GM12878 (cell line): ENCODE measurements at regions of chr4 and their contacts with region 1.

Region 1: GRCh38 chr4:74376888-74377483 is 12.0 kb downstream of the EREG start:
- DNase-seq: no peak
- ATAC-seq: peak; percentile 81
- H3K4me3 ChIP-seq: no peak overlapping the region
- H3K27ac ChIP-seq: no peak overlapping the region
- H3K4me1 ChIP-seq: no peaks in the 10 kb centered on the region
- H3K27me3 ChIP-seq: no peaks in the 10 kb centered on the region; a peak in 1 of 4 replicates
- CTCF ChIP-seq: peak; percentile 35 to 50 (median 36); a peak in 5 of 6 replicates
- EP300 ChIP-seq: no peak
- POLR2A ChIP-seq: no peak
- RAD21 ChIP-seq: peak; percentile 65

Region 2: DNA sequence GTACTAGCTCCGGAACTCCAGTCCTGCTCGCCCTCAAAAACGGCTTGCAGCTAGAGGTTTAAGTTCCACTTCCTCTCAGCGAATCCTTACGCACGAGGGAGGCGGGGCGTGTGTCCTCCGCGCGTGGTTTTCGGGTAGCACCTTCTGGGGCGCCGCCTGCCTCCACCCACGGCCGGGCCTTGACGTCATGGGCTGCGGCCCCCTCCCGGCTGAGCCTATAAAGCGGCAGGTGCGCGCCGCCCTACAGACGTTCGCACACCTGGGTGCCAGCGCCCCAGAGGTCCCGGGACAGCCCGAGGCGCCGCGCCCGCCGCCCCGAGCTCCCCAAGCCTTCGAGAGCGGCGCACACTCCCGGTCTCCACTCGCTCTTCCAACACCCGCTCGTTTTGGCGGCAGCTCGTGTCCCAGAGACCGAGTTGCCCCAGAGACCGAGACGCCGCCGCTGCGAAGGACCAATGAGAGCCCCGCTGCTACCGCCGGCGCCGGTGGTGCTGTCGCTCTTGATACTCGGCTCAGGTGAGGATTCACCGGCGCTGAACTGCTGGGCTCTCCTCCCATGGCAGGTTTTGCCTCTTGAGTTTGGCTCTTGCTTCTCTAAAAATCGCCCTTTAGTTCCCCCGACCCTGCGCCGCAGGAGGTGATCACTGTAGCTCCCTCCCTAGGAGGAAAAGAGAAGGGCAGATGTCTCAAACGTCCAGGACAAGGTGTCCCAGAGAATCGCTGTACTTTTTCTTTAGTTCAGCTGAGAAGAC is 68.1 kb after region 1 on chr4 and contains the start of gene AREG:
- CTCF ChIA-PET with region 1: no interaction called
- POLR2A ChIA-PET with region 1: no interaction called
- RAD21 ChIA-PET with region 1: no interaction called
- SMC1A ChIA-PET with region 1: interaction called, 3 read pairs
- in situ Hi-C with region 1: no loop called
- intact Hi-C with region 1: loop called (anchors 5 kb)
- DNase-seq: peak; percentile 12
- ATAC-seq: peak; percentile 92
- H3K4me3 ChIP-seq: peak within 1 kb of the TSS; percentile 62
- H3K27ac ChIP-seq: no peak within 1 kb of the TSS
- H3K4me1 ChIP-seq: peaks cover 3% of the 10 kb centered on the region; the same call in 1 of the 2 replicates
- H3K27me3 ChIP-seq: peaks cover 0 to 1% of the 10 kb centered on the region in 2 experiments; a peak in 2 of 4 replicates
- CTCF ChIP-seq: peak; percentile 42 to 59 (median 43)
- EP300 ChIP-seq: peak; percentile 58 to 69; a peak in 2 of 4 replicates
- POLR2A ChIP-seq: no peak
- RAD21 ChIP-seq: no peak
- polyA plus RNA-seq, gene AREG: not detected

Region 3: GRCh38 chr4:74531963-74532794 is 155.2 kb after region 1 on chr4:
- CTCF ChIA-PET with region 1: interaction called, 76 read pairs
- POLR2A ChIA-PET with region 1: no interaction called
- RAD21 ChIA-PET with region 1: interaction called, 4 read pairs
- SMC1A ChIA-PET with region 1: interaction called, 15 read pairs
- in situ Hi-C with region 1: loop called (anchors 10 kb)
- intact Hi-C with region 1: loop called (anchors 1 kb)
- DNase-seq: peak; percentile 8
- ATAC-seq: peak; percentile 86
- H3K4me3 ChIP-seq: no peak overlapping the region
- H3K27ac ChIP-seq: no peak overlapping the region
- H3K4me1 ChIP-seq: no peaks in the 10 kb centered on the region
- H3K27me3 ChIP-seq: no peaks in the 10 kb centered on the region
- CTCF ChIP-seq: peak; percentile 44 to 59 (median 45)
- EP300 ChIP-seq: no peak
- POLR2A ChIP-seq: no peak
- RAD21 ChIP-seq: peak; percentile 58

Region 4: DNA sequence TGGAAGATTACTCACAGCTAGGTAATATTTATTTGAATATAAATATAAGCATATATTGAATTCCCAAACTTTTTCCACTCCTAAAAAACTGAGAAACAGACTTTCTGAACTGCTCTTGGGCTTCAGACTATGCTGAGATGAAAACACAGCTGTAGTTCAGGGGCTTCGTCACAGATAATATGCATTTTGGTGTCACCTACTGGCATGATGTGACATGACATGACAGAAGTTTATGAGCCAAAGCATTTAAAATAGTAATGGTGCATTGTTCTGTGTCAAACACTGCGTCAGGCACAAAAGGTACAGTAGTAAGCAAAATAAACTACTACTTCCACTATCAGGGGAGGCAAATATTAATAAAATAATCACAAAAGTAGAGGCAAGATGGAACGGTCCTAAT is 246.1 kb after region 1 on chr4:
- CTCF ChIA-PET with region 1: interaction called, 63 read pairs
- POLR2A ChIA-PET with region 1: no interaction called
- RAD21 ChIA-PET with region 1: interaction called, 25 read pairs
- SMC1A ChIA-PET with region 1: interaction called, 26 read pairs
- in situ Hi-C with region 1: no loop called
- intact Hi-C with region 1: loop called (anchors 1 kb)
- DNase-seq: no peak
- ATAC-seq: peak; percentile 77
- H3K4me3 ChIP-seq: no peak overlapping the region
- H3K27ac ChIP-seq: no peak overlapping the region
- H3K4me1 ChIP-seq: no peaks in the 10 kb centered on the region
- H3K27me3 ChIP-seq: no peaks in the 10 kb centered on the region
- CTCF ChIP-seq: peak; percentile 45 to 71 (median 56); a peak in 5 of 6 replicates
- EP300 ChIP-seq: no peak
- POLR2A ChIP-seq: no peak
- RAD21 ChIP-seq: peak; percentile 63

Region 5: DNA sequence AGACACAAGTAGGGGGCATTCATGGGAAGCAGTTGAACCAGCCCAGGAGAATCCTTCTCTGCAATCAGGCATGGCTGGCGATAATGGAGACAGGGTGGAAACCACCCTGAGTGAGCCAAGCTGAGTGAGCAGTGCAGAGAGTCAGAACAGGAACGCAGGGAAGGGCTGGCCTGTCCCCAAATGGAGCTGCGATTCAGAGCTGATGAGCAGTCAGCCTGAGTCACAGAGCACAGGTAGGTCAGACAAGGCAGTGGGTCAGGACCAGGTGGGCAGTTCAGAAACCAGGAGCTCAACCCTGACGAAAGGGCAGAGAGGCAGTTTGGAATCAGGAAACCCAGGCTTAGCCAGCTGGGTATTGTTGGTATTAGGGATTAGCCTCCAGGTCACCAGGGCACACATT is 288.4 kb after region 1 on chr4:
- CTCF ChIA-PET with region 1: interaction called, 95 read pairs
- POLR2A ChIA-PET with region 1: no interaction called
- RAD21 ChIA-PET with region 1: no interaction called
- SMC1A ChIA-PET with region 1: interaction called, 8 read pairs
- in situ Hi-C with region 1: loop called (anchors 5 kb)
- intact Hi-C with region 1: no loop called
- DNase-seq: no peak
- ATAC-seq: peak; percentile 64
- H3K4me3 ChIP-seq: no peak overlapping the region
- H3K27ac ChIP-seq: no peak overlapping the region
- H3K4me1 ChIP-seq: no peaks in the 10 kb centered on the region
- H3K27me3 ChIP-seq: no peaks in the 10 kb centered on the region
- CTCF ChIP-seq: no peak
- EP300 ChIP-seq: no peak
- POLR2A ChIP-seq: no peak
- RAD21 ChIP-seq: no peak